ENCODE measurements at regions of chr6 and their contacts with region 1.

Region 1: GRCh38 chr6:138403801-138404661 is at the start of gene HEBP2:
- DNase-seq: peak; percentile 93
- ATAC-seq: peak; percentile 86
- H3K4me3 ChIP-seq: peak within 1 kb of the TSS; percentile 83 to 95 (median 93)
- H3K4me3 Mint-ChIP-seq: peak within 1 kb of the TSS; percentile 89
- H3K27ac ChIP-seq: peak within 1 kb of the TSS; percentile 55 to 93
- H3K27ac Mint-ChIP-seq: peak within 1 kb of the TSS; percentile 94
- H3K4me1 ChIP-seq: peaks cover 8 to 16% of the 10 kb centered on the region in 2 donors
- H3K4me1 Mint-ChIP-seq: peaks cover 23% of the 10 kb centered on the region
- H3K27me3 ChIP-seq: no peaks in the 10 kb centered on the region
- H3K27me3 Mint-ChIP-seq: no peaks in the 10 kb centered on the region
- CTCF ChIP-seq: peak; percentile 52
- total RNA-seq, gene HEBP2: 35.1 and 40.7 TPM in 2 replicates

Region 2: GRCh38 chr6:137224799-137225198 is 1179.2 kb before region 1 on chr6:
- CTCF ChIA-PET with region 1: no interaction called
- POLR2A ChIA-PET with region 1: no interaction called
- intact Hi-C with region 1: loop called (anchors 5 kb)
- DNase-seq: peak; percentile 80
- ATAC-seq: peak; percentile 79
- H3K4me3 ChIP-seq: peak overlapping the region in 1 of 5 experiments; percentile 8
- H3K4me3 Mint-ChIP-seq: peak overlapping the region; percentile 66
- H3K27ac ChIP-seq: peak overlapping the region; percentile 37 to 52
- H3K27ac Mint-ChIP-seq: peak overlapping the region; percentile 88
- H3K4me1 ChIP-seq: peaks cover 57 to 65% of the 10 kb centered on the region in 2 donors
- H3K4me1 Mint-ChIP-seq: peaks cover 70% of the 10 kb centered on the region
- H3K27me3 ChIP-seq: no peaks in the 10 kb centered on the region
- H3K27me3 Mint-ChIP-seq: no peaks in the 10 kb centered on the region
- CTCF ChIP-seq: no peak

Region 3: DNA sequence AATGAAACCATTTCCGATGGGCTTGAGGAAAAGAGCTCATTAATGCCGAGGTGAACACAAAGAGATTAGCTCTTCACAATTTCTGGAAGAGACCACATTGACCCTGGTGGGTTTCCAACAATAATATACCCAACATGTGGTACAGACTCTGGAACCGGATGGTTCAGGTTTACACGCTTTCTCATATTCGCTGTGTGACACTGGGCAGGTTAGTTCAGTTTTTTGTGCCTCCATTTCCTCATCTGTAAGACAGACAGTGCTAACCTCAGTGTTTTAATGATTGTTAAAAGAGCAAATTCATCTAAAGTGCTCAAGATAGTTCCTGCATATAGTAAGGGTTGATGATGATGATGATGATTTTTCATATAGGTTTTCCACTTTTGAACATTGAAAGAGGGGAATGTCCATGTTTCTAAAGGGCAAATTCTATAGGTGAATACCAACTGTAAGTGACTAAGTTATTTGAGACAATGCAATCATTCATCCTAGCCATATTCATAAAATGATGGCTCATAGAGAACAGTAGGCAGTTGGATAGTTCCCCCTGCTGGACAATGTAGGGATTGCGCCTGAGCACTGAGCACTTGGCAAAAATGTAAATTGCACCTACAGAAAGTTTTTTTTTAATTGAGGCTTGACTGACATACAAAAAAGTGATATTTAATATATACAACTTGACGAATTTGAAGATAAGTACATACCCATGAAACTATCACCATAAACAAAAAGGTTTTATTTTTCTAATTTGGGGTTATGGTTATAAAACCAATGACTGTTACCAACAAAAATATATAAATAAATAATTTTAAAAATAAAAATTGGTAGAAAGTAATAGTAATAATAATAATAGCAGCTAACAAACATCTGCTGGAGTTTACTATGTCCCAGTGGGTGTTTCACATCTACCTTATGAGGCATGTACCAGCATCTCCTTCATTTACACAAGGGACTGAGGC is 294.7 kb before region 1 on chr6:
- CTCF ChIA-PET with region 1: interaction called, 3 read pairs
- POLR2A ChIA-PET with region 1: no interaction called
- intact Hi-C with region 1: loop called (anchors 5 kb)
- DNase-seq: peak; percentile 81
- ATAC-seq: peak; percentile 66
- H3K4me3 ChIP-seq: no peak overlapping the region
- H3K4me3 Mint-ChIP-seq: peak overlapping the region; percentile 11
- H3K27ac ChIP-seq: no peak overlapping the region
- H3K27ac Mint-ChIP-seq: no peak overlapping the region
- H3K4me1 ChIP-seq: peaks cover 14 to 19% of the 10 kb centered on the region in 2 donors
- H3K4me1 Mint-ChIP-seq: peaks cover 18% of the 10 kb centered on the region
- H3K27me3 ChIP-seq: peaks cover 0 to 42% (median 33%) of the 10 kb centered on the region in 4 experiments
- H3K27me3 Mint-ChIP-seq: peaks cover 48% of the 10 kb centered on the region
- CTCF ChIP-seq: peak; percentile 99

Region 4: DNA sequence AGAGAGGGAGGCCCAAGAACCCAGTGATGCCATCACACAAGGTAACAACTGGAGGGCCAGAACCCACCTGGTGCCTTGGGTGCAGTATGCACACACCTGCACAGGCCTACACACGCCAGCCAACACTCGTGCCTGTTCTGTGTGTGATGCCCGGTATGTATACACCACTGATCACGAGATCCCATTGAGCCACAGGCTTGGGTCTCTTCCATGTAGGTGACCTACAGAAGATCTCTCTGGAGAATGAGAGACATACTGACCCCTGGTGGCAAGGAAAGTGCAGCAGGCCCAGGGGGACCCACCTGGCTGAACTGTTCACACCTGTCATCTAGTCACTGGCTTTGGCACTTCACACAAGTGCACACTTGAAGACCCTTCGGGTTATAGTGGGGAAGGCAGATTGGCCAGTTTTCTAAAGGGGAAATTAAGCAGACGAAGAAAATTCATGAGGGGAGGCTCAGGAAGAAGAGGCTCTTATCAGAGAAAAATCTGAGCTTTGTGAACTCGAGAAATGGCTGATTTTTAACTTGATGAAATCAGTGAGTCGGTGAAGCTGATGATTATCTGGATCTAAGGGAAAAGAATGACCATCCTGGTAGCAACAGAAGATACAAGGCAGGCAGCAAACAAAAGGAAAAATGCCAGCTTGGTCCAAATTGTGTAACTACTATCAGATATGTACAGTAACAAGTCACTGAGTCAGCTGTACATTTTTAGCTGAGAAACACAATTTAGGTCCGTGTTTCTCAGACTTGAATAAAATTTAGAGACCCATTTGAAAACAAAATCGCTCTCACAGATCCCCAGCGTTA is 116.7 kb before region 1 on chr6:
- CTCF ChIA-PET with region 1: interaction called, 5 read pairs
- POLR2A ChIA-PET with region 1: no interaction called
- intact Hi-C with region 1: loop called (anchors 2 kb)
- DNase-seq: peak; percentile 47
- ATAC-seq: no peak
- H3K4me3 ChIP-seq: no peak overlapping the region
- H3K4me3 Mint-ChIP-seq: no peak overlapping the region
- H3K27ac ChIP-seq: no peak overlapping the region
- H3K27ac Mint-ChIP-seq: no peak overlapping the region
- H3K4me1 ChIP-seq: no peaks in the 10 kb centered on the region
- H3K4me1 Mint-ChIP-seq: no peaks in the 10 kb centered on the region
- H3K27me3 ChIP-seq: no peaks in the 10 kb centered on the region
- H3K27me3 Mint-ChIP-seq: peaks cover 1% of the 10 kb centered on the region
- CTCF ChIP-seq: peak; percentile 62

Region 5: GRCh38 chr6:138773177-138774091 is 369.4 kb after region 1 on chr6 and contains the start of gene CCDC28A:
- CTCF ChIA-PET with region 1: interaction called, 4 read pairs
- POLR2A ChIA-PET with region 1: no interaction called
- intact Hi-C with region 1: loop called (anchors 1 kb)
- DNase-seq: peak; percentile 97
- ATAC-seq: peak; percentile 84
- H3K4me3 ChIP-seq: peak within 1 kb of the TSS; percentile 83 to 98 (median 86)
- H3K4me3 Mint-ChIP-seq: peak within 1 kb of the TSS; percentile 99
- H3K27ac ChIP-seq: peak within 1 kb of the TSS; percentile 92 to 97
- H3K27ac Mint-ChIP-seq: peak within 1 kb of the TSS; percentile 99
- H3K4me1 ChIP-seq: peaks cover 21 to 28% of the 10 kb centered on the region in 2 donors
- H3K4me1 Mint-ChIP-seq: peaks cover 32% of the 10 kb centered on the region
- H3K27me3 ChIP-seq: no peaks in the 10 kb centered on the region
- H3K27me3 Mint-ChIP-seq: no peaks in the 10 kb centered on the region
- CTCF ChIP-seq: no peak
- total RNA-seq, gene CCDC28A: 26.3 and 26.9 TPM in 2 replicates

Measured in B cell (primary cell).